Activated CD4-positive, alpha-beta T cell treated with anti-CD3 and anti-CD28 coated beads for 36 hours (primary cell): ENCODE measurements at regions of chr20 and their contacts with region 1.

Region 1: GRCh38 chr20:25399037-25399430 is 8.4 kb upstream of the ABHD12 start:
- DNase-seq: peak; percentile 15
- ATAC-seq: peak; percentile 63
- H3K4me3 Mint-ChIP-seq: no peak overlapping the region
- H3K27ac Mint-ChIP-seq: no peak overlapping the region
- H3K4me1 Mint-ChIP-seq: no peaks in the 10 kb centered on the region
- H3K27me3 Mint-ChIP-seq: no peaks in the 10 kb centered on the region

Region 2: DNA sequence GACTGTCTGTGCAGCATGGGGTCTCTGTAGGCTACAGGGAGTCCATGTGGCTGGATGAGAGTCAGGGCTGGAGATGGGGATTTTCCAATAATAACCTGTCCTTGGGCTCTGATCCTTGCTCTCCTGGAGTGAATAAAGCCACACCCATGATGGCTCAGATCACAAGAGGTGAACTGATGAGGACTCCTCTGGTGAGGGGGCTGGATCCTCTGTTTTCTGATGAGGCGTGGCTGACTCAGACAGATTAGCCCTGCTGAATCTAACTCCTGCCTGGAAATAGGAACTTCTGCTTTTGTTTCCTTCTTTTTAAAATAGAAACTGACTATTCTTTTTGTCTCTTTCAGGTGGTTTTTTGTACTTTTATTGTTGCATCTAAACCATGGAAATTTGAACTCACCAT is 1857.7 kb before region 1 on chr20:
- CTCF ChIA-PET with region 1: no interaction called
- POLR2A ChIA-PET with region 1: no interaction called
- intact Hi-C with region 1: no loop called
- DNase-seq: no peak
- ATAC-seq: no peak
- H3K4me3 Mint-ChIP-seq: no peak overlapping the region
- H3K27ac Mint-ChIP-seq: no peak overlapping the region
- H3K4me1 Mint-ChIP-seq: no peaks in the 10 kb centered on the region
- H3K27me3 Mint-ChIP-seq: peaks cover 26% of the 10 kb centered on the region

Region 3: DNA sequence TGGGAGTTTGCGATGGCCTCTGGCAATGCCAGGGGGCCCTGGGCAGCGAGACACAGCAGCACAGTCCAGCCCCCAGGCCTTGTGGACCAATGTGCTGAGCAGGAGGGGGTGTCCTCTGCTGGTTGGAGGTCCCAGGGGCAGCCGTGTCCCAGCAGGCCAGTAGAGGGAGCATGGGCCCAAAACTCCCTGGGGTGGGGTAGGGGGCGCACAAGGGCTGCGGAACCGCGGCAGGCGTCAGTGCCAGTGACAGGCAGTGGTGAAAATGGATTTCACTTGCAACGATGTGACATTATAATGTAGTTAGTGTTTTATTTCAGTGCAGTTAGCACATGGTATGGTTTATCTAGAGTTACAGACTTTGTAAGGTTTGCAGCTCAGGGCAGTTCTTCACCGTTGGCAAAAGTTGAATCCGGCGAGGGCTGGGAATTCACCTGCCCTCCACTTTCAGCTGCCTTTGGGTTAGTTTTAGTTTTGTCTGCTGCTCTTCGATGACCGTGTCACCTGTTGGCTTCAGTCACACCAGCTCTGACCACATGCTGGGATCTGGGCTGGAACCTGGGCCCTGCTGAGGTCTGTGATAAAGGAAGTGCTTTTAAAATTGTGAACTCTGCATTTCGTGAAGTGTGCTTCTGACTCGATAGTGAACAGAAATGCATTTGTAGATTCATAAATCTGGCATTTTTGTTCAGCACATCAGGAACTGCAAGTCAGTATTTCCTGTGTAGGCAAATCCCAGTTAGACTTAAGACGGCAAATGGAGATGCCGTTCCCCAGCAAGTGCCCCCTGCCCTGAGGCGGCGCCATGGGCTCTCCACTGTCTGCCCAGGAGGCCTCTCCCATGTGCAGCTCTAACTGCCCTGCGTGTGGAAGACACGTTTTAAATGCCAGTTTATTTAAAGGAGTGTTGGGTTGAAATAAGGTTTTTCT is 104.3 kb before region 1 on chr20:
- CTCF ChIA-PET with region 1: interaction called, 34 read pairs
- POLR2A ChIA-PET with region 1: no interaction called
- intact Hi-C with region 1: loop called (anchors 1 to 2 kb)
- DNase-seq: peak; percentile 78
- ATAC-seq: peak; percentile 91
- H3K4me3 Mint-ChIP-seq: no peak overlapping the region
- H3K27ac Mint-ChIP-seq: no peak overlapping the region
- H3K4me1 Mint-ChIP-seq: no peaks in the 10 kb centered on the region
- H3K27me3 Mint-ChIP-seq: no peaks in the 10 kb centered on the region

Region 4: DNA sequence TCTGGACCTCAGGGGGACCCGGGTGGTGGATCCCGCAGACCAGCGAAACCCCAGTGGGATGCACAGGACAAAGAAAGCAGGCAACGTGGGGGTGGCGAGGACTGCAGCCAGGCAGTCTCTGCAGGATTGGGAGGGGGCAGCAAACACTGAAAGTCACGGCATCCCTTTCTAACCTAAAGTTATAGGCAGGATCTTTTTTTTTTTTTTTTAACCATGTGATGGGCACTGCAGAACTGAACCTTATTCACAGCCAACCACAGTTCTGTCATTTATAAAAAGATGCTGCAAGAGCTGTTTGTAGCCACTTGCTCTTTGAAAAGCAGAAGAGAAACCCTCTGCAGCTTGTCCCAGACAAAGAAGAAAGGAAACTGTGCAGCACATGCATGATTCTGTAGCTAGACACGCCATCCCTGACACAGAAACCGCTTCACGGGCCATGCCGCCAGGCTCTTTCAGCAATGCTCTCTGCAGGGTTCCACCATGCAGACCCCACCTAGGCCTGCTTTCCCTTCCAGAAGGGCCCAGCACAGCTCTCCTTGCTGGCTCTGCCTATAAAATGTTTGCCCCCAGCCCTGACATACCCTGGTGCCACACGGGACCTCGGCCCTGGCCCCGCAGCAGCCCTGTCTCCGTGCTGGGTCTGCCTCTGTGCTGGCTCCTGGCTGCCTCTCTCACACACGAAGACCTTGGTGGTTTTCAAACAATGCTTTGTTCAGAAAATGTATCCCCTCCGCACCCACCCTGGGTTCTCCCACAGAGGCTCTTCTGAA is 80.4 kb before region 1 on chr20:
- CTCF ChIA-PET with region 1: no interaction called
- POLR2A ChIA-PET with region 1: no interaction called
- intact Hi-C with region 1: no loop called
- DNase-seq: no peak
- ATAC-seq: no peak
- H3K4me3 Mint-ChIP-seq: no peak overlapping the region
- H3K27ac Mint-ChIP-seq: no peak overlapping the region
- H3K4me1 Mint-ChIP-seq: peaks cover 5% of the 10 kb centered on the region
- H3K27me3 Mint-ChIP-seq: no peaks in the 10 kb centered on the region

Region 5: GRCh38 chr20:25470045-25470444 is 71.0 kb after region 1 on chr20:
- CTCF ChIA-PET with region 1: no interaction called
- POLR2A ChIA-PET with region 1: no interaction called
- intact Hi-C with region 1: no loop called
- DNase-seq: peak; percentile 73
- ATAC-seq: peak; percentile 85
- H3K4me3 Mint-ChIP-seq: no peak overlapping the region
- H3K27ac Mint-ChIP-seq: no peak overlapping the region
- H3K4me1 Mint-ChIP-seq: peaks cover 4% of the 10 kb centered on the region
- H3K27me3 Mint-ChIP-seq: no peaks in the 10 kb centered on the region